ENCODE measurements at regions of chrX and their contacts with region 1.

Region 1: GRCh38 chrX:1336331-1336943 is at the start of gene IL3RA:
- H3K4me3 Mint-ChIP-seq: peak within 1 kb of the TSS; percentile 96
- H3K27ac Mint-ChIP-seq: peak within 1 kb of the TSS; percentile 96
- H3K4me1 Mint-ChIP-seq: peaks cover 68% of the 10 kb centered on the region
- H3K27me3 Mint-ChIP-seq: no peaks in the 10 kb centered on the region

Region 2: DNA sequence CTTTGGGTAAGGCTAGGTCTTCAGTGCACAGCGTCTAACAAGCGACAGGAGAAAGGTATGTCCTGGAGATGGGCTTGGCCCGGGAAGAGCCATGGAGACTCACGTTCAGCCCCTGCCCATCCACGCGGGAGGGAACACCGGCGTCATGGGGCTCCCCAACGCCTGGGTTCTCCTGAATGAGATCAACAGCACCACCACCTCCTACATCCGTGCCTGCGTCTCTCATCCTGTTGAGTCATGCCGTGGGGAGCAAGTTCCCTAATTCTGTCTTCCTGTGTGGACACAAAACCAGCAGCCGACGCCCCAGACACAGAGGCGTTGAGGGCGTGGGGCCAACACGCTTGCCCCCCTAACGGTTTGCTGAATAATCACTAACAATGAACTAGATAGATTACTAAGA is 19.9 kb before region 1 on chrX:
- intact Hi-C with region 1: loop called (anchors 1 kb)
- H3K4me3 Mint-ChIP-seq: peak overlapping the region; percentile 79
- H3K27ac Mint-ChIP-seq: peak overlapping the region; percentile 99
- H3K4me1 Mint-ChIP-seq: peaks cover 85% of the 10 kb centered on the region
- H3K27me3 Mint-ChIP-seq: no peaks in the 10 kb centered on the region